Activated B cell treated with CpG ODN at 0.5 μM for 24 hours (primary cell): ENCODE measurements at regions of chr3 and their contacts with region 1.

Region 1: GRCh38 chr3:100260685-100261484 is at the start of gene TBC1D23:
- DNase-seq: peak; percentile 93
- ATAC-seq: peak; percentile 100
- H3K4me3 Mint-ChIP-seq: peak within 1 kb of the TSS; percentile 93
- H3K27ac Mint-ChIP-seq: peak within 1 kb of the TSS; percentile 96
- H3K4me1 Mint-ChIP-seq: peaks cover 43% of the 10 kb centered on the region
- H3K27me3 Mint-ChIP-seq: no peaks in the 10 kb centered on the region
- CTCF ChIP-seq: no peak
- total RNA-seq, gene TBC1D23: 27.2 and 27.7 TPM in 2 replicates

Region 2: GRCh38 chr3:98901392-98902350 is 1359.2 kb before region 1 on chr3 and contains the start of gene DCBLD2:
- CTCF ChIA-PET with region 1: no interaction called
- POLR2A ChIA-PET with region 1: no interaction called
- intact Hi-C with region 1: loop called (anchors 2 kb)
- DNase-seq: peak; percentile 86
- ATAC-seq: peak; percentile 98
- H3K4me3 Mint-ChIP-seq: peak within 1 kb of the TSS; percentile 88
- H3K27ac Mint-ChIP-seq: peak within 1 kb of the TSS; percentile 73
- H3K4me1 Mint-ChIP-seq: peaks cover 19% of the 10 kb centered on the region
- H3K27me3 Mint-ChIP-seq: peaks cover 12% of the 10 kb centered on the region
- CTCF ChIP-seq: no peak
- total RNA-seq, gene DCBLD2: 0.95 and 1.8 TPM in 2 replicates

Region 3: DNA sequence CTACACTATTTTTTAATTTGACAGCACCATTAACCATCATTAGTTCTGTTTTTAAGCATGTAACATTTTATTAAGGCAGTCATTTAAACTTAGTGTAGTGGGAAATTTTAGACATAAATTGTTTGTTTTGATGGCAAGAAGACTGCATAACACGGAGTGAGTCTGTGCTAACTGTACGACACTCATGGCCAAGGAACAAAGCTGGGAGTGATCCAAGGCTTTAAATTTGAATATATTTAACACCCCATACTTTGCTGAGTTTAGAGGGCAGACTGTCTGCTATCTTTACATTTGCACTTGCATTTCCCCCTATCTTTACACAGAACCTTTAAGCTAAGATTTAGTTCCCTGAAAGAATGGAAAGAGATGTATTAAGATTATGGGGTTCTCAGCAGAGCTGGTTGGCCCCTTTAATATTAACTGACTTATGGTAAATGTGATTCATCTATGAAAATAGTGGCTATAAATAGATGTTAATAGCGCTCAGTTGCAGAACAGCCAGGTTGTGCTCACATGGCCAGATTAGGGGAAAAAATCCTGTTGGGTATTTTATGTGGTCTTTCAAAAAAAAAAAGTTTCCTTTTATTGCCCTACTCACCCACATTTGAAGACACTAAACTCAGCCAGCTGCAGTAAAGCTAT is 322.5 kb before region 1 on chr3:
- CTCF ChIA-PET with region 1: no interaction called
- POLR2A ChIA-PET with region 1: interaction called, 3 read pairs
- intact Hi-C with region 1: loop called (anchors 2 kb)
- DNase-seq: no peak
- ATAC-seq: peak; percentile 31
- H3K4me3 Mint-ChIP-seq: peak overlapping the region; percentile 75
- H3K27ac Mint-ChIP-seq: peak overlapping the region; percentile 84
- H3K4me1 Mint-ChIP-seq: peaks cover 27% of the 10 kb centered on the region
- H3K27me3 Mint-ChIP-seq: no peaks in the 10 kb centered on the region
- CTCF ChIP-seq: no peak

Region 4: DNA sequence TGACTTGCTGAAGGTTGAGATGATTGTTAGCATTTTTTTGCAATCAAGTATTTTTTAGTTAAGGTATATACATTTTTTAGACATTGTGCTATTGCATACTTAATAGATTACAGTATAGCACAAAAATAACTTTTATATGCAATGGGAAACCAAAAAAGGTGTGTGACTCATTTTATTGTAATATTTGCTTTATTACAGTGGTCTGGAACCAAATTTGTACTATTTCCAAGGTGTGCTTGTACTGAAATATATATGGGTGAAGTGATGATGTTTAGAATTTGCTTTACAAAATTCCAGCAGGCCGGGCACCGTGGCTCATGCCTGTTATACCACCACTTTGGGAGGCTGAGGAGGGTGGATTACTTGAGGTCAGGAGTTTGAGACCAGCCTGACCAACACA is 29.2 kb before region 1 on chr3:
- CTCF ChIA-PET with region 1: no interaction called
- POLR2A ChIA-PET with region 1: no interaction called
- intact Hi-C with region 1: no loop called
- DNase-seq: no peak
- ATAC-seq: no peak
- H3K4me3 Mint-ChIP-seq: no peak overlapping the region
- H3K27ac Mint-ChIP-seq: no peak overlapping the region
- H3K4me1 Mint-ChIP-seq: peaks cover 2% of the 10 kb centered on the region
- H3K27me3 Mint-ChIP-seq: peaks cover 2% of the 10 kb centered on the region
- CTCF ChIP-seq: no peak

Region 5: DNA sequence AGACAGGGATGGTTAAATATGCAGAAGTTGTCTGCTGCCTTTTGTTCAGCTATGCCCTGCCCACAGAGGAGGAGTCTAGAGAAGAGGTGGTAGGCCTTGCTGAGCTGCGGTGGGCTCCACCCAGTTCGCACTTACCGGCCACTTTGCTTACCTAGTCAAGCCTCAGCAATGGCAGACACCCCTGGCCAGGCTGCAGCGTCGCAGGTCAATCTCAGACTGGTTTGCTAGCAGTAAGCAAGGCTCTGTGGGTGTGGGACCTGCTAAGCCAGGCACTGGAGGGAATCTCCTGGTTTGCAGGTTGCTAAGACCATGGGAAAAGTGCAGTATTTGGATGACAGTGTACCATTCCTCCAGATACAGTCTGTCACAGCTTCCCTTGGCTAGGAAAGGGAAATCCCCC is 219.2 kb after region 1 on chr3:
- CTCF ChIA-PET with region 1: no interaction called
- POLR2A ChIA-PET with region 1: no interaction called
- intact Hi-C with region 1: no loop called
- DNase-seq: no peak
- ATAC-seq: no peak
- H3K4me3 Mint-ChIP-seq: no peak overlapping the region
- H3K27ac Mint-ChIP-seq: no peak overlapping the region
- H3K4me1 Mint-ChIP-seq: no peaks in the 10 kb centered on the region
- H3K27me3 Mint-ChIP-seq: peaks cover 8% of the 10 kb centered on the region
- CTCF ChIP-seq: no peak

Region 6: DNA sequence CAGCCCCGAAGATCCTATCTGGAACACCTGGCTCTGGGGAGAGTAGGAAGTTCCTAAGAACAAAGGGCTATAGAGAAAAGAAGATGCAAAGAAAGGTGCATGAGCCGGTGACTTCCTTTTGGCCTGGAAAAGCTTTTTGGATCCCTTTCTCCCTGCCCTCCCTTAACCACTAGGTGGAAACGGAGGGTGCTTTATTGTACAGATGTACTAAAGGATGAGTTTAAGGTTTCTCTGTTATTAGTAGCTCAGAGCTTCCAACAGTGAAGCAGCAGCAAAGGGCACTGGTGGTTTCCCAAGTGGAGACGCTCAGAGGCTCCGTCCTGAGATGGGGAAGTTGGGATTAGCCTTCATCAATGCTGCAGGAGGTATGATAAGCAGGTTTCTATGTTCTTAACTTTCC is 342.6 kb after region 1 on chr3:
- CTCF ChIA-PET with region 1: no interaction called
- POLR2A ChIA-PET with region 1: no interaction called
- intact Hi-C with region 1: loop called (anchors 2 kb)
- DNase-seq: no peak
- ATAC-seq: peak; percentile 45
- H3K4me3 Mint-ChIP-seq: peak overlapping the region; percentile 83
- H3K27ac Mint-ChIP-seq: peak overlapping the region; percentile 97
- H3K4me1 Mint-ChIP-seq: peaks cover 27% of the 10 kb centered on the region
- H3K27me3 Mint-ChIP-seq: peaks cover 3% of the 10 kb centered on the region
- CTCF ChIP-seq: no peak

Region 7: GRCh38 chr3:101779047-101779821 is 1518.3 kb after region 1 on chr3 and contains the start of gene NXPE3:
- CTCF ChIA-PET with region 1: no interaction called
- POLR2A ChIA-PET with region 1: no interaction called
- intact Hi-C with region 1: loop called (anchors 5 kb)
- DNase-seq: peak; percentile 94
- ATAC-seq: peak; percentile 92
- H3K4me3 Mint-ChIP-seq: peak within 1 kb of the TSS; percentile 87
- H3K27ac Mint-ChIP-seq: peak within 1 kb of the TSS; percentile 94
- H3K4me1 Mint-ChIP-seq: peaks cover 31% of the 10 kb centered on the region
- H3K27me3 Mint-ChIP-seq: no peaks in the 10 kb centered on the region
- CTCF ChIP-seq: no peak
- total RNA-seq, gene NXPE3: 15.8 and 16.0 TPM in 2 replicates